PC-3 (cell line): ENCODE measurements at regions of chr17 and their contacts with region 1.

Region 1: GRCh38 chr17:29293890-29294579 is at the start of gene NUFIP2:
- DNase-seq: peak; percentile 96
- ATAC-seq: peak; percentile 95
- H3K4me3 ChIP-seq: peak within 1 kb of the TSS; percentile 100
- H3K27ac ChIP-seq: peak within 1 kb of the TSS; percentile 75
- H3K4me1 ChIP-seq: peaks cover 19% of the 10 kb centered on the region
- H3K27me3 ChIP-seq: no peaks in the 10 kb centered on the region
- CTCF ChIP-seq: no peak
- total RNA-seq, gene NUFIP2: 16.1 and 22.6 TPM in 2 replicates

Region 2: GRCh38 chr17:29219378-29220047 is 74.5 kb before region 1 on chr17:
- CTCF ChIA-PET with region 1: no interaction called
- POLR2A ChIA-PET with region 1: no interaction called
- intact Hi-C with region 1: loop called (anchors 2 kb)
- DNase-seq: peak; percentile 82
- ATAC-seq: peak; percentile 99
- H3K4me3 ChIP-seq: no peak overlapping the region; the same call in 1 of the 2 replicates
- H3K27ac ChIP-seq: no peak overlapping the region
- H3K4me1 ChIP-seq: no peaks in the 10 kb centered on the region
- H3K27me3 ChIP-seq: no peaks in the 10 kb centered on the region
- CTCF ChIP-seq: peak; percentile 92

Region 3: DNA sequence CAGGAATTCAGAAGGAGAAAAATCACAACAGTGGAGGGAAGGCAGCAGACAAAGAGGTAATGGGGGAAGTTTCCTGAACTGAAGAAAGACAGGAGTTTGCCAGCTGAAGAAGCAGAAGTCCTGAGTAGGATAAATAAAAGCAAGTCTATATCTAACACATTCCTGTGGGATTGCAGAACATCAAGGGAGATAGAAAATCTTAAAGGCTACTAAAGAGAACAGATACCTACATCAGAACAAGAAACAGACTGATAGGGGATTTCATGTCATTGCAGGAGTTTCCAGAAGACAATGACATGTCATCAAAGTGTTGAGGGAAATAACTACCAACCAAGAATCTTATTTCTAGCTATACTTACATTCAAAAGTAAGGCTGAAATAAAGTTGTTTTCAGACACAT is 68.6 kb before region 1 on chr17:
- CTCF ChIA-PET with region 1: no interaction called
- POLR2A ChIA-PET with region 1: interaction called, 12 read pairs
- intact Hi-C with region 1: no loop called
- DNase-seq: no peak
- ATAC-seq: no peak
- H3K4me3 ChIP-seq: no peak overlapping the region
- H3K27ac ChIP-seq: no peak overlapping the region
- H3K4me1 ChIP-seq: no peaks in the 10 kb centered on the region
- H3K27me3 ChIP-seq: no peaks in the 10 kb centered on the region
- CTCF ChIP-seq: no peak

Region 4: GRCh38 chr17:29379084-29379991 is 85.3 kb after region 1 on chr17:
- CTCF ChIA-PET with region 1: no interaction called
- POLR2A ChIA-PET with region 1: no interaction called
- intact Hi-C with region 1: no loop called
- DNase-seq: no peak
- ATAC-seq: no peak
- H3K4me3 ChIP-seq: no peak overlapping the region
- H3K27ac ChIP-seq: no peak overlapping the region
- H3K4me1 ChIP-seq: no peaks in the 10 kb centered on the region; the same call in 1 of the 2 replicates
- H3K27me3 ChIP-seq: no peaks in the 10 kb centered on the region
- CTCF ChIP-seq: no peak